Mammary epithelial cell (primary cell): ENCODE measurements at regions of chr10 and their contacts with region 1.

Region 1: GRCh38 chr10:67959839-67960476 is 75.5 kb downstream of the SIRT1 start:
- DNase-seq: no peak
- H3K4me3 ChIP-seq: no peak overlapping the region
- H3K27ac ChIP-seq: no peak overlapping the region
- H3K4me1 ChIP-seq: no peaks in the 10 kb centered on the region
- H3K27me3 ChIP-seq: no peaks in the 10 kb centered on the region
- CTCF ChIP-seq: no peak

Region 2: GRCh38 chr10:67884313-67884841 is 75.6 kb before region 1 on chr10 and contains the start of gene SIRT1:
- CTCF ChIA-PET with region 1: no interaction called
- dilution Hi-C with region 1: no loop called
- in situ Hi-C with region 1: no loop called
- intact Hi-C with region 1: no loop called
- DNase-seq: peak; percentile 87
- H3K4me3 ChIP-seq: peak within 1 kb of the TSS; percentile 83 to 89 (median 84)
- H3K27ac ChIP-seq: peak within 1 kb of the TSS; percentile 68
- H3K4me1 ChIP-seq: peaks cover 5% of the 10 kb centered on the region
- H3K27me3 ChIP-seq: no peaks in the 10 kb centered on the region
- CTCF ChIP-seq: no peak
- total RNA-seq, gene SIRT1: 12.3 to 14.5 TPM

Region 3: DNA sequence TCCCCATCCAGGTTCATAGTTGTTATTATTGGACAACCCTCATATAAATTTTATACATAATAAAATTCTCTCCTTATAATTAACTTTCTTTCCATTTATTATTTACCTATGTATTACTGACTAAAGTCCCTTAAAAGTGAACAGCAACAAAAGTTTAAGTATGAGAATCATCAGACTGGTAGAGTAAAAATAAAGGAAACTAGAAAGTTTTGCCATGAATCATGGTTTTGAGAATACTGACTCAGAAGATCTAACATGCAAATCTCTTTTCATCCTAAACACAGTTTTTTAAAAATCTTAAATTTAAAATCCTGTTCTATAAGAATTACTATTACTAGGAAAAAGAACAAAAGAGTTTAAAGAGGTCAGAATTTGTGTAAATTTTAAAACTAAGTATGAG is 83.1 kb after region 1 on chr10:
- CTCF ChIA-PET with region 1: no interaction called
- dilution Hi-C with region 1: no loop called
- in situ Hi-C with region 1: no loop called
- intact Hi-C with region 1: no loop called
- DNase-seq: peak; percentile 11
- H3K4me3 ChIP-seq: no peak overlapping the region
- H3K27ac ChIP-seq: no peak overlapping the region
- H3K4me1 ChIP-seq: no peaks in the 10 kb centered on the region
- H3K27me3 ChIP-seq: no peaks in the 10 kb centered on the region
- CTCF ChIP-seq: no peak

Region 4: GRCh38 chr10:68359189-68359588 is 399.2 kb after region 1 on chr10:
- CTCF ChIA-PET with region 1: interaction called, 18 read pairs
- dilution Hi-C with region 1: no loop called
- in situ Hi-C with region 1: no loop called
- intact Hi-C with region 1: no loop called
- DNase-seq: no peak
- H3K4me3 ChIP-seq: no peak overlapping the region
- H3K27ac ChIP-seq: no peak overlapping the region
- H3K4me1 ChIP-seq: no peaks in the 10 kb centered on the region
- H3K27me3 ChIP-seq: no peaks in the 10 kb centered on the region
- CTCF ChIP-seq: no peak